Left ventricle myocardium inferior (tissue), 1 donor: ENCODE measurements at regions of chr2 and their contacts with region 1.

Region 1: DNA sequence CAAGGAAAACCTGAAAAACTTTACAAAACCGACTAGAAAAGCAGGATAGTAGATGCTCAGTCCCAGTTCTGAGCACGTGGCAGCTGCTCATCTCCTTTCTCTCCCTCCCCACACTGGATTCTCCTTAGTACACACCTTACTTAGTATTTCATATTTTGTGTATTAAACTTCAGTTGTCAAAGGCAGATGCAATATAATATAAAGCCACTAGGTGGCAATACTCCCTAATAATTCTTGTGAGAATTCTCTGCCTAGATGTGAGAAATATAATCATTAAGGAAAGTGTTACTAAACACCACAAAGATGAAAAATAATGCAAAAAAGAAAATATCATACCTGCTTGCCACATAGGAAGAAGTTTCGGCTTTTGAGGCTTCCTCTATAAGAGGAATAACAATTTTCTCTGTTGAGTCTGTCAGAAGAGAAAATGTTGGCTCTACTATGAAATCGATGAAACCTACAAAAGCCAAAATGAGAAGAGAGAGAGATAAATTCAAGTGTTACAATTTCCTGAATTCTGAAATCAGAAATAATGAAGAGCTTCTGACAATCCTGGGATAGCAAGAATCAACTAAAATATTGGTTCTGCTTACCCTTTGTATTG is 200.6 kb downstream of the PPP1R1C start:
- DNase-seq: no peak
- H3K4me3 ChIP-seq: no peak overlapping the region
- H3K27ac ChIP-seq: peak overlapping the region; percentile 37
- H3K4me1 ChIP-seq: peaks cover 12% of the 10 kb centered on the region
- H3K27me3 ChIP-seq: no peaks in the 10 kb centered on the region
- CTCF ChIP-seq: peak; percentile 84

Region 2: DNA sequence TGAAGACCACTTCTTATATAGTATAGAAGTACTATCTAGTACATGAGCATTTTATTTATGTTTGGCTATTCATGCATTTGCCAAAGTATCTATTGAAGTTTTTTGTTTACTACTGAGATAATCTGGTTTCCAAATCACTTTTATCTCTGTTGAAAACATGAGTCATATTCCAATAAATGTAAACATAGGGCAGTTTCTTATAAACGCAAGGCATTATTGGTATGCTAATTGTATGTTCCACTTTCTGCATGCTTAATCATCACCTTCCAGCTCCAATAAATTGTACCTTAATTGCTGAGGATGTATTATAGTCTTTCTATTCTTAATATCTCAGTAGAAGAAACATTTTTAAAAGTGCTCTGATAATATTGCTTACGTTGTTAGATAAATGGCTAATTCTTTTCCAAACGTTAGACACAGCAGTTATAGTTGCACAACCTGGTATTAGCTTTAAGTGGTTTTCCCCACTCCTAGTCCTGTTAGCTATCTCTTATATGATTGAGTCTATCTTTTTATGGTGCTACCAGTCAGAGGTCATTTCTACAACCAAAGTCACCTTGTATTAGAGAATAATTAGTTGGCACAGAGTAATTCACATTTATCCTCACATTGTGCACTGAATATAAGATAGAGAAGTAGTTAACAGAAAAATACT is 711.9 kb before region 1 on chr2:
- intact Hi-C with region 1: no loop called
- DNase-seq: no peak
- H3K4me3 ChIP-seq: no peak overlapping the region
- H3K27ac ChIP-seq: no peak overlapping the region
- H3K4me1 ChIP-seq: peaks cover 4% of the 10 kb centered on the region
- H3K27me3 ChIP-seq: no peaks in the 10 kb centered on the region
- CTCF ChIP-seq: no peak

Region 3: DNA sequence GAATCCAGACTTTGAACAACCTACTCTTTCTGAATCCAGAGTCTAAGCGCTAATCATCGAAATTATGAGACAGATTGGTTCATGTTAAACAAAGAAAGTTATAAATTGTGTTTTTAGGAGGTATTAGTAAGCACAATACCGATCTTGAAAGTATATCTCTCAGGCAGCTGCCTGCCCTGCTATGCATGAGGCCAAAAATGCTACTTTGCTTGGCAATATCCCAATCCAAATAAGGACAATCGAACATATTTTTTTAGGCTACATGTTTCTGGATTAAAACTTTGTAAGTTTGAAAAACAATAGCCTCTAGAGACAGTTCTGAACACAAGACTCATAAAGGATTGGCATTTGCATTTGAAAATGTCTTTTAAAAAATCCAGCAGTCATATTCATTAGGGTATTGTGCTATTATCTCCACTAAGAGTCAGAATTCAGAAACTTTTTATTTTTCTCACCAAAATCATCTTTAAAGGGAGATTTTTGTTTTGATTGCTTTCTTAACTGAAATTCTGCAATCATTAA is 73.5 kb after region 1 on chr2:
- intact Hi-C with region 1: no loop called
- DNase-seq: no peak
- H3K4me3 ChIP-seq: no peak overlapping the region
- H3K27ac ChIP-seq: peak overlapping the region; percentile 42
- H3K4me1 ChIP-seq: no peaks in the 10 kb centered on the region
- H3K27me3 ChIP-seq: no peaks in the 10 kb centered on the region
- CTCF ChIP-seq: no peak

Region 4: DNA sequence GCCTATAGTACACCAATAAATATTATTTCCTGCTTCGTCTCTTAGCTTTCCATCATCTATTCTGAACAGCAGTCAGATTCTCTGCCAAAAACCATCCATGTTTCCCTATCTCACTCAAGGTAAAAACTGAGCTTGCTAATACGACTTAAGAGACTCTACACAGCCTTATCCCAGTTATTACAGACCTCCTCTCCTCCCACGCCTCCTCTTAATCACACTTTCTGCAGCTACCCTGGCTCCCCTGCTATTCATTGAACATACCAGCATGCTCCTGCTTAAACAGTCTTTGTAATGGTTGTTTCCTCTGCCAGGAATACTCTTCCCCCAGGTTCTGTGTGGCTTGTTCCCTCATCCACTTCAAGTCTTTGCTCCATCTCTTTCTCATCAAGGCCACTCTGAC is 159.2 kb after region 1 on chr2:
- intact Hi-C with region 1: no loop called
- DNase-seq: no peak
- H3K4me3 ChIP-seq: no peak overlapping the region
- H3K27ac ChIP-seq: no peak overlapping the region
- H3K4me1 ChIP-seq: no peaks in the 10 kb centered on the region
- H3K27me3 ChIP-seq: no peaks in the 10 kb centered on the region
- CTCF ChIP-seq: no peak

Region 5: GRCh38 chr2:182650704-182651103 is 464.5 kb after region 1 on chr2:
- intact Hi-C with region 1: loop called (anchors 2 kb)
- DNase-seq: no peak
- H3K4me3 ChIP-seq: no peak overlapping the region
- H3K27ac ChIP-seq: no peak overlapping the region
- H3K4me1 ChIP-seq: peaks cover 12% of the 10 kb centered on the region
- H3K27me3 ChIP-seq: no peaks in the 10 kb centered on the region
- CTCF ChIP-seq: peak; percentile 69